Activated T-helper 2 cell treated with anti-CD3 and anti-CD28 coated beads, Interferon-gamma antibody, Interleukin-2, Interleukin-4, amounts not matched to agents 10 μg/mL and 5 μg/mL and 100 μg/mL, durations not matched to agents 14 hours and 24 hours and 36 hours (primary cell): ENCODE measurements at regions of chr1 and their contacts with region 1.

Region 1: GRCh38 chr1:37793773-37794371 is at the start of gene MANEAL:
- DNase-seq: peak; percentile 15
- H3K4me3 Mint-ChIP-seq: peak within 1 kb of the TSS; percentile 60
- H3K27ac Mint-ChIP-seq: no peak within 1 kb of the TSS
- H3K4me1 Mint-ChIP-seq: peaks cover 10% of the 10 kb centered on the region
- H3K27me3 Mint-ChIP-seq: peaks cover 37% of the 10 kb centered on the region
- total RNA-seq, gene MANEAL: 0.94 and 1.1 TPM in 2 replicates

Region 2: DNA sequence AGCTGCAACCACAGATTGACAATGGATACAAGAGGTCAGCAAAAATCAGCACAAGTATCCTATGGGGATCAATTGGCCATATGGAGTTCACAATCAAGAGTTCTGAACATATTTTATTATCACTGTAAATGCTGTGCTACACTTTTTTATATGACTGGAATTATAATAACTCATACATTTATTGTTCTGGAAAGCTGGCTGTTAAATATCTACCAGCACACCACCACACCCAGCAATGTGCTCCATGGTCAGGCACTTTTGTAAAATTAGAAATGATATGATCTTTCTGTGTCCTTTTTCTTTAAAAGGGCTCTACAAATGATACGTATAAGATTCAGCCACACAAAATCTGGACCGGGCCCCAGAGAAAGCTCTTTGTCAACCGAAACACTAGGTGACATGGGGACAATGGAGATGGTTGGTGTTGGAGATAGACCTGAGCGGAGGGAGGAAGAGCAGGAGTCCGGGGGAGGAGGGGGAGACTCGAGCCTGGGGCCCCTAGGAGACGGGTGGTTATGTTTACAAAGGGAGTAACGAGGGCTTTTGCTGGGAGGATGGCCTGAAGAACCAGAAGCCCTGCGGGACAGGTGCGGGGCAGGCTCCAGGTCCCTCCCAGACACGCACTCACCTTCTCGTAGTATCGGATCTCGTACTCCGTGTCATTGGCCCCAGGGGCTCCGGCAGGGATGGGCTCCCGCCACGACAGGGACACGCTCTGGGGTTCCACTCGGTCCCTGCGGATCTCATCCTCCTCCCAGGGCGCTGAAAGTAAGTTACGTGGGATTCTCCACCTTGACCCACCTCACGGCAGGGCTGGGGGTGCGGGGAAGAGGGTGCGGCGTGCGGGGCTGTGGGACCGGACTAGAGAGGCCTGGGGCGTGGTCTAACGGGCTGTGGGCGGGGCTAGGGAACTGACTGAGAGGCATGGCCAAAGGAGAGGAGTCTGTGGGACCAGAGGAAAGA is 59.0 kb before region 1 on chr1:
- intact Hi-C with region 1: loop called (anchors 2 kb)
- DNase-seq: no peak
- H3K4me3 Mint-ChIP-seq: no peak overlapping the region
- H3K27ac Mint-ChIP-seq: no peak overlapping the region
- H3K4me1 Mint-ChIP-seq: no peaks in the 10 kb centered on the region
- H3K27me3 Mint-ChIP-seq: peaks cover 22% of the 10 kb centered on the region

Region 3: DNA sequence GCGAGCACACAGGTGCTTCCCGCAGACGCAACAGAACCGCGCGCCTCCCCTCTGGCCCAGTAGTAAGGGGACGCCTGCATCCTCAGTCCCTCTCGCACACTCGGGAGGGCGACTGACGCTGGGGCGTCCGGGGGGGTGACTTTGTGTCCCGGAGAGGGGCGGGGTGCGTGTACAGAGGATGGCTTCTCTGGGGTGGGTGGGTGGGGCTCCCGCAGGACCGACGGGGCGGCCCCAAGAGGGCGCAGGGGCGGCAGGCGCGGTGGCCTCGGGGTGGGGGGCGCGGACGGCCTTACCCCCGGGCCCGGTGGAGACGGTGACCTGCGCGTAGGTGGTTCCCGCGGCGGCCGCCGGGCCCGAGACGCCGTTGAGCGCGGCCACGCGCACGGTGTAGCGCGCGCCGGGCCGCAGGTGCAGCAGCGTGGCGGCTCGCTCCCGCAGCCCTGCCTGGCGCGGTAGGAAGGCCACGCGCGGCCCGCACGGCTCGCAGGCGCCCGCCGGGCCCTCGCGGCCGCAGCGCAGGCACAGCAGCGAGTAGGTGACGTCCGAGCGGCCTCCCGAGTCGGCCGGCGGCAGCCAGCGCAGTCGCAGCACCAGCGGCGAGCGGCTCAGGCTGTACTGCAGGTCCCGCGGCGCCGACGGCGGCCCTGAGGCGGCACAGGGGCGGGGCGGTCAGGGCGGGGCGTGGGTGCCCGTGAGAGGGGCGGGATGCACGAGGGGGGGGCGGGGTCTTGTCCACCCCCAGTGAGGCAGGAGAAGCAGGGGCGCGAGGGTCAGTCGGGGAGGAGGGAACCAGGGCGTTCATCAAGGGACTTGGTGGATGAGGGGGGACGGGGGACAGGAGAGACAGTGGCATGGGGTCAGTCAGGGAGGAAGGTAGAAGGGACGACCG is 41.0 kb before region 1 on chr1:
- intact Hi-C with region 1: no loop called
- DNase-seq: no peak
- H3K4me3 Mint-ChIP-seq: peak overlapping the region; percentile 54
- H3K27ac Mint-ChIP-seq: no peak overlapping the region
- H3K4me1 Mint-ChIP-seq: peaks cover 13% of the 10 kb centered on the region
- H3K27me3 Mint-ChIP-seq: peaks cover 32% of the 10 kb centered on the region

Region 4: DNA sequence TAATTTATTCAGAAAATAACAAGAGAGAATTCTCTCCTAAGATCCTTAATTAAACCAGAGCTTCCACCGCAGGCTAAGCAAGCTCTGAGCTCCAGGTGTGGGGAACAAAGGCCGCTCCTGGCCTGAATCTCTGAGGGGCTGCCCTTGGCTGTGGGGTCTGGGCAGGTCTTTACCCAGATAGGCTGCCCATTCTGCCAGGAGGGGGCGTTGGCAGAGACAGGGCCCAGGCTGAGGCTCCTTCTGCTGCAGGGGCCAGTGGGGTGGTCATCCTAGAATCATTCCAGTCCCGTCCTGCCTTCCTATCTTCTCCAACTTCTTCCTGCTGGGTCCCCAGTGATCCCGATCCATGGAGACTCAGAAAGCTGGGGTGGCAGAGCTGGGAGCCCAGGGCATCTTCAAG is 335.6 kb after region 1 on chr1:
- intact Hi-C with region 1: no loop called
- DNase-seq: no peak
- H3K4me3 Mint-ChIP-seq: no peak overlapping the region
- H3K27ac Mint-ChIP-seq: no peak overlapping the region
- H3K4me1 Mint-ChIP-seq: no peaks in the 10 kb centered on the region
- H3K27me3 Mint-ChIP-seq: peaks cover 28% of the 10 kb centered on the region